ENCODE measurements at regions of chr9 and their contacts with region 1.

Region 1: GRCh38 chr9:78121488-78121887 is 89.9 kb upstream of the GNAQ start:
- DNase-seq: peak; percentile 68
- ATAC-seq: no peak
- H3K4me3 Mint-ChIP-seq: no peak overlapping the region
- H3K27ac Mint-ChIP-seq: no peak overlapping the region
- H3K4me1 Mint-ChIP-seq: peaks cover 23% of the 10 kb centered on the region
- H3K27me3 Mint-ChIP-seq: peaks cover under 1% of the 10 kb centered on the region
- CTCF ChIP-seq: peak; percentile 87

Region 2: DNA sequence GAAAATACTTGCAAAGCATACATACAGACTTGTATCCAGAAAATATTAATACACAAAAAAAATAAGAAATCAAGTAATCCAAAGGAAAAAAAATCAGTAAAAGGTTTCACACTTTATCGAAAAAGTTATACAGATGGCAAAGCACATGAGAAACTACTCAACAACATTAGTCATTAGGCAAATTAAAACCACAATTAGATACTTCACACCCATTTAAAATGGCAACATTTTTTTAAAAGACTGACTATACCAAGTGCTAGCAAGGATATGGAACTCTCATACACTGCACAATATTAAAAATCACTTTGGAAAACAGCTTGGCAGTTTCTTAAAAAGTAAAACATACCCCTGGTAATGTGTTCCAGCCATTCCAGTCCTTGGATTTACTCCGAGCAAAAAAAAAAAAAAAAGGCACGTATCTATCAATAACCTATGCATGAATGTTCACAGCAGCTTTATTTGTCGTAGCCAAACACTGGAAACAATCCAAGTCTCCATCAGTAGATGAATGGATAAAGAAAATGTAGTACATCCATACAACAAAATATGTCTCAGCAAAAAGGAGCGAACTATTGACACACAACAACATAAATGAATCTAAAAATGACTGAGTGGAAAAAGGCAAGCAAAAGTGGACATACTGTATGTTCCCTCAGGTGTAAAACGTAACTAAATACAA is 155.9 kb before region 1 on chr9:
- CTCF ChIA-PET with region 1: no interaction called
- POLR2A ChIA-PET with region 1: no interaction called
- intact Hi-C with region 1: no loop called
- DNase-seq: no peak
- ATAC-seq: peak; percentile 42
- H3K4me3 Mint-ChIP-seq: no peak overlapping the region
- H3K27ac Mint-ChIP-seq: no peak overlapping the region
- H3K4me1 Mint-ChIP-seq: peaks cover 50% of the 10 kb centered on the region
- H3K27me3 Mint-ChIP-seq: no peaks in the 10 kb centered on the region
- CTCF ChIP-seq: no peak

Region 3: GRCh38 chr9:78103971-78104433 is 17.5 kb before region 1 on chr9:
- CTCF ChIA-PET with region 1: interaction called, 10 read pairs
- POLR2A ChIA-PET with region 1: no interaction called
- intact Hi-C with region 1: no loop called
- DNase-seq: peak; percentile 78
- ATAC-seq: peak; percentile 71
- H3K4me3 Mint-ChIP-seq: peak overlapping the region; percentile 26
- H3K27ac Mint-ChIP-seq: no peak overlapping the region
- H3K4me1 Mint-ChIP-seq: peaks cover 33% of the 10 kb centered on the region
- H3K27me3 Mint-ChIP-seq: no peaks in the 10 kb centered on the region
- CTCF ChIP-seq: no peak